Calu3 (cell line): ENCODE measurements at regions of chr2 and their contacts with region 1.

Region 1: DNA sequence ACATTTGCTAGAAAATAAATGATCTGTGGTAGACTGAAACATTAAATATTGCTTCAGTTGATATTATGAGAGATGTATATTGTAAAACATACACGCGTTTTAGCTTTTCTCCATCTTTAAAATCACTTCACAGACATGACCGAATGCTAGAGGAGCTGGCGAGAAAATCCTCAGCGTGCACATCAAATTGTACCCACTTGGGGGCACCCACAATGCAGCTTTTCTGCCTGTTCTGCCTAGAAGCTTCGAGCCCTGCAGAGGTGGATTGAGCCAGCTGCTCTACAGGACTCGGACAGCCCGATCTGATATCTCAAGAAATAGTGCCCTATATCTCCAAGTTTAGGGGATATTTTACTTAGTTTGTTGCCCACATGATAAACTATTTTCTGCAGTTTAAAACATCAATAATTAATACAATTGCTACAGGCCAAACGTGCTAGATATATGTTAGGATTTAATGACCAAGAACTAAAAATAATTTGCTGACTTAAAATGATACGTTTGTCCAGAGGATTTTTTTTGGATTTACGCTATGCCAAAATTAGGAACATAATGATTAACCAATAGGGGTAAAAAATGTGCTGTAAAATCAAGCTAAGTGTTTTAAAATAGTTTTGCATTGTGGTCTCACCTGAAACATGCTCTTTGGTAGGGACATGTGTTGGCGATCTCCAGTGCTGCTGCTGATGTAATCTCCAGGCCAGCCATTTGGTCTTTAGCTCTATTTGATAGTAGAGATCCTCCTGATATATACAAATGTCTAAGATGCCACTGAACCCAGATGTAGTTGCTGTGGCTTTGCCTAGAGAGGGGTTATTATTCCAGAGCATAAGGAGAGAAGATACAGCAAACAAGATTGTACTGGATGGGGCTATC is 22.3 kb upstream of the ATP5MC3 start:
- DNase-seq: peak; percentile 70
- H3K4me3 Mint-ChIP-seq: no peak overlapping the region
- H3K27ac Mint-ChIP-seq: no peak overlapping the region
- H3K4me1 Mint-ChIP-seq: no peaks in the 10 kb centered on the region
- H3K27me3 Mint-ChIP-seq: no peaks in the 10 kb centered on the region
- CTCF ChIP-seq: peak; percentile 47

Region 2: DNA sequence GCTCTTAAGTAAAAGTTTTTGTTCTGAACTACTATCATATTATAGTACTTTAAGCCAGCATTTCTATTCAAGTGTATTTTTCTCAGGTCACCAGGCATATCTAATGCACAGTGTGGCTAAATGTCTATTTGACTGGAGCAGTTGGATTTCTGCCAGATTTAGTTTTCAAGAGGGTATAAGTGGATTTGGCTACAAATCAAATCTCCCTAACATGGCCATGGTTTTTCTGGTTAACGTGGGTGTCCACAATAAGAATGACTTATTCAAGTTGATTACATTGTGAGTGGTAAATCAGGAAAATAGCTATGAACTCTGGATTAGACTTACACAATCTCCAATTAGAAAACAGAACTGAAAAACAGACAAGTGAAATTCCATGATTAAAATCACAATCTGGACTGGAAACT is 193.0 kb before region 1 on chr2:
- CTCF ChIA-PET with region 1: no interaction called
- intact Hi-C with region 1: no loop called
- DNase-seq: no peak
- H3K4me3 Mint-ChIP-seq: no peak overlapping the region
- H3K27ac Mint-ChIP-seq: no peak overlapping the region
- H3K4me1 Mint-ChIP-seq: no peaks in the 10 kb centered on the region
- H3K27me3 Mint-ChIP-seq: peaks cover 26% of the 10 kb centered on the region
- CTCF ChIP-seq: no peak

Region 3: DNA sequence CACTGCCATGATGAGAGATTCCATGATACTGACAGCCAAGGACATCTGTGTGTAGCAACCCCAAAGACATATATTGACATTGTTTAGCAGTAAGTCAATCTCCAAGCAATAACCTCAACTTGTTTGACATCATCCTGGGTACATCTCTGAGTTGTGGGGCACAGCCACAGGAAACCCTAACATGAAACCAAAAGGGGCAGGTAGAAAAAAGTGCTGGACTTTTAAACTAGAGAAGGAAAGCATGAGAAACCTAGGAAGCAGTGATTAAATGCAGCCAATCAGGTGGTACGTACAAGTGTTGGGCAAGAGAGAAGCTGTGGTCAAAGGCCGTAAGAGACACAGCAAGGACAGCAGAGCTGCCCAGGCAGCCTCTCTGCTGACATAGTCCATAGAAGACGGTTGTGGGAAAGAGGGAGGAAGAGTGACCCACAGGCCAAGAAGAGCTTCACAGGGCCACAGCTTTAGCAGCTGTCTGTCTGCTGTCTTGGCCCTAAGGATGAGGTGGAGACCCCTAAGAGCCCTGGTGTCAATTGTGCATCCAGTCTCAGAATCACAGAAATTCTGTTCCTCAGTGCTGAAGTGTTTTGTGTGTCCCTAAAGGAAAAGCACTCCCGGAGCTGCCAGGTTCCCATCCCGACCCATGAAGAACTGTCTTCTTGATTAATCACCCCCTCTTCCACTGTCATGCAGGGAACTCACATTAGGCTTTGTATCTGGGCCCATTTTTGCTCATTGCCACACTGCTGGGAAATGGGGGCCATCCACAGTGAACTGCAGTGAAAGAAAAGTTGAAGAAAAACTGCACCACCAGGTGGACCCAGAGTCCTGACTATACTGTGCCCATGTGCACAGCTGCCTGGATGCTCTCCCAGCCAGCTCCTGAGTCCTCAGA is 173.2 kb before region 1 on chr2:
- CTCF ChIA-PET with region 1: no interaction called
- intact Hi-C with region 1: loop called (anchors 5 kb)
- DNase-seq: peak; percentile 43
- H3K4me3 Mint-ChIP-seq: no peak overlapping the region
- H3K27ac Mint-ChIP-seq: no peak overlapping the region
- H3K4me1 Mint-ChIP-seq: no peaks in the 10 kb centered on the region
- H3K27me3 Mint-ChIP-seq: no peaks in the 10 kb centered on the region
- CTCF ChIP-seq: peak; percentile 44

Region 4: GRCh38 chr2:175080479-175080878 is 123.4 kb before region 1 on chr2:
- CTCF ChIA-PET with region 1: no interaction called
- intact Hi-C with region 1: no loop called
- DNase-seq: no peak
- H3K4me3 Mint-ChIP-seq: no peak overlapping the region
- H3K27ac Mint-ChIP-seq: no peak overlapping the region
- H3K4me1 Mint-ChIP-seq: no peaks in the 10 kb centered on the region
- H3K27me3 Mint-ChIP-seq: no peaks in the 10 kb centered on the region
- CTCF ChIP-seq: no peak

Region 5: DNA sequence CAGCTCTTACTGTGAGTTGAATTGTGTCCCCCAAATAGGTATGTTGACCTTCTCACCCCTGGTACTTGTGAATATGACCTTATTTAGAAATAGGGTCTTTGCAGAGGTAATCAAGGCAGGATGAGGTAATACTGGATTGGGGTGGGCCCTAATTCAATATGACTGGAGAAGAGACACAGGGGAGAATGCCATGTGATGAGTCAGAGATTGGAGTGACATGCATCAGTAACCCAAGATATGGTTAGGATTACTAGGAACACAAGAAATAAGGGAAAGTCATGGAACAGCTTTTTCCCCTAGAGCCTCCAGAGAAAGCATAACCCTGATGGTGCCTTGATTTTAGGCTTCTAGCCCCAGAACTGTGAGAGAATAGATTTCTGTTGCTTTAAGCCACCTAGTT is 14.7 kb after region 1 on chr2:
- CTCF ChIA-PET with region 1: no interaction called
- intact Hi-C with region 1: no loop called
- DNase-seq: no peak
- H3K4me3 Mint-ChIP-seq: no peak overlapping the region
- H3K27ac Mint-ChIP-seq: no peak overlapping the region
- H3K4me1 Mint-ChIP-seq: no peaks in the 10 kb centered on the region
- H3K27me3 Mint-ChIP-seq: peaks cover 20% of the 10 kb centered on the region
- CTCF ChIP-seq: no peak

Region 6: GRCh38 chr2:175282290-175282689 is 78.4 kb after region 1 on chr2:
- CTCF ChIA-PET with region 1: interaction called, 9 read pairs
- intact Hi-C with region 1: loop called (anchors 1 kb)
- DNase-seq: no peak
- H3K4me3 Mint-ChIP-seq: no peak overlapping the region
- H3K27ac Mint-ChIP-seq: no peak overlapping the region
- H3K4me1 Mint-ChIP-seq: no peaks in the 10 kb centered on the region
- H3K27me3 Mint-ChIP-seq: peaks cover 25% of the 10 kb centered on the region
- CTCF ChIP-seq: peak; percentile 41